Motor neuron (in vitro differentiated cells): ENCODE measurements at regions of chr2 and their contacts with region 1.

Region 1: DNA sequence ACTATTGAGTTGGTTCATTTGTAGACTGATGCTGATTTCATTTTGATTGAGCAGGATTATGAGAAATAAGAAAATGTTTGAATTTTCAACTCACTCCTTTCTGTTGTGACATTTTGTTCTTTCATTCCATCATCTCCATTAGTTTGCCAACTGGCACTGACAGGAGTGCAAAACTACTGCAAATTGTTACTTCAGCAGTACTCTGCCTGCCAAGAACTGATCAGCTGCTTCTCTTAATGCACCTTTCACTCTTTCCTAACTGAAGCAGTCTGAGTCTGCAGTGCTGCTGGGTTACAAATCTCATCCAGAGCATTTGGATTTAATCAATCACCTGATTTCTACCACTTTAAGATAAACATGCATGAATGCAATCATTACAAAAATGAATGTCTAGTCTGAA is 70.9 kb downstream of the TMEFF2 start:
- ATAC-seq: no peak
- H3K4me3 ChIP-seq: no peak overlapping the region
- H3K27ac ChIP-seq: no peak overlapping the region
- H3K4me1 ChIP-seq: peaks cover 0 to 3% of the 10 kb centered on the region in 2 donors

Region 2: GRCh38 chr2:191321861-191322686 is 801.8 kb before region 1 on chr2:
- in situ Hi-C with region 1: no loop called
- ATAC-seq: peak in 7 of 8 experiments; percentile 6 to 96 (median 93)
- H3K4me3 ChIP-seq: no peak overlapping the region
- H3K27ac ChIP-seq: peak overlapping the region; percentile 41 to 53
- H3K4me1 ChIP-seq: peaks cover 10 to 28% of the 10 kb centered on the region in 2 donors

Region 3: DNA sequence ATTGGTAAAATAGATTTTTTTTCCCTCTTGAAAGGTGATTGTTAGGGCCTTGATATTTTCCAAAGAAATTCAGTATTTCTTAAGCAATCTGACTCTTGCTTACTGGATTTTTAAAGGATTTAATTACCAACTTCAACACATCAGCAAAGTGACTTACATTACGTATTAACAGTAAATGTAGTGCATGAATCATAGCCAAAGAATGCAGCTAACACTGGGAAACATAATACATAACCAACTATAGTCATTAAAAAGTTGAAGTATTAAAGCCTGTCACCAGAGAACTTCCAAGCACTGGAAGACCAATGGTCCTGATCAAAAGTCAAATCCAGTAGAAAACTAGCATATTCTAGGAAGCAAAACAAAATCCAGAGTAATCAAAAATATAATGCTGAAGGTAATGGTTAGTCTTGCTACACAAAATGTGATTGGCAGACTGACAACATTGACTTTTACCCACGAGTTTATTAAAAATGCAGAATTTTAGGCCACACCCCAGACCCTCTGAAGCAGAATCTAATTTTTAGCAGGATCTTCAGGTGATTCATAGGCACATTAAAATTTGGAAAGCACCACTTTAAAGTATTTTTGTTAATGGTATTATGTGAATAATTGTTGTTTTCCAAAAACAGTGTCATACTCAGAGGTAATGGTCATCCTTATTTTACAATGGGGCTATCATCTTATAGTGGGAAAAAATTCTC is 245.1 kb before region 1 on chr2:
- in situ Hi-C with region 1: no loop called
- ATAC-seq: peak in 3 of 8 experiments; percentile 25 to 97 (median 92)
- H3K4me3 ChIP-seq: no peak overlapping the region
- H3K27ac ChIP-seq: no peak overlapping the region
- H3K4me1 ChIP-seq: no peaks in the 10 kb centered on the region

Region 4: DNA sequence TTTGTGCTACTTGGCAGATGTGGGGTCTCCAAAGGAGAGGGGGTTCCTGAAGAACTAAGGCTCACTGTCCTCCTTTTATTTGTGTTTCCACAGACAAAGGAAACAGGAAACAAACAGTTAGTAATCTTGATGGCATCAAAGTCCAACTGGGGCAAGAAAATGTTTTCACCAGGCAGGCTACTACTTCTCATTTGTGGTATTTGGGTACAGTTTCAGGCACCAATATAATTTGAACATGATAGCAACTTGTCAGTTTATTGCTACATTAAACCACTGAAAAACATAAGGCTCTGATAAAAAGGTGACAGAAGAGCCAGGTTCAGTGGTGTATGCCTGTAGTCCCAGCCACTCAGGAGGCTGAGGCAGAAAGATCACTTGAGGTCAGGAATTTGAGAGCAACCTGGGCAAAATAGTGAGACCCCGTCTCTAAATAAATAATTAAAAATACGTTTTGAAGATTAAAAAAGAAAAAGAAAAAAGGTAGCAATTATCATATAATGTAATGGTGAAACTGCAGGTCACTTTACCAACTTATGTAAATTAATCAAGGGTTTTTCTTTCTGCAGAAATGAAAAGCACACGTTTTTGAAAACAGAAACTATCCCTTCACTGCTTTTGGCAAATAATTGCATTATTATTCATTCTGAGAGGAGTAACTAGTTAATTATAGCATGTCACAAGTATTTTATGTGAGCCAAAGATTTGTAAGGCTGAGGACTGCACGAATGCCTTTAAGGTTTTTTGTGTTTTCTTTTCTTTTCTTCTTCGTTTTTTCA is 119.5 kb before region 1 on chr2:
- in situ Hi-C with region 1: loop called in 1 of 9 experiments (anchors 25 kb)
- ATAC-seq: no peak
- H3K4me3 ChIP-seq: no peak overlapping the region
- H3K27ac ChIP-seq: no peak overlapping the region
- H3K4me1 ChIP-seq: peaks cover 0 to 8% of the 10 kb centered on the region in 2 donors

Region 5: GRCh38 chr2:192500550-192501213 is 376.8 kb after region 1 on chr2:
- in situ Hi-C with region 1: no loop called
- ATAC-seq: peak; percentile 52 to 98 (median 82)
- H3K4me3 ChIP-seq: no peak overlapping the region
- H3K27ac ChIP-seq: no peak overlapping the region
- H3K4me1 ChIP-seq: no peaks in the 10 kb centered on the region